ENCODE measurements at regions of chr6 and their contacts with region 1.

Region 1: DNA sequence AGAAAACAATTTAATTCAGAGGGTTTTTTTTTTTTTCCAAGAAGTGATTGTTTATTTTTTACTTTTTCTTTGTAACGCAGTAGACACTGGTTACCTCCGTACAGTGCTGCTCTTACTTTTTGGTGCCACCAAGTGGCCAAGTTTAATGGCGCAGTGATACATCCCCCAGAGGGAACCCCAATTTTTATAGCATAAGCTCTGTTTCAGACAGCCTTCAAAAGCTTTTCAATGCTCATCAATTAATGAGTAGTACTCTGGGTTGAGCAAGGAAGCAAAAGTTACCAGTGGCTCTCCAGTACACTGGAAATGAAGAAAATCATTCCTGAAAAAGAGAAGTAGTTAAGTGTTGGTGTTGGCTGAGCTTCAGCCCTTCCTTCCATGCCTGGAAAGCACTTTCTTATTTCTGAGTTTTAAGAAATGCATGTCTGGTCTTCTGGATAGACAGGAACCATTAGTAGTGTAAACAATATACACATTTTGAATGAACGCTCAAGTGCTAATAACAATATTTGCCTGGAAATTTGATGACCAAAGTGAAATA is 129.1 kb upstream of the SMLR1 start:
- DNase-seq: no peak
- ATAC-seq: peak; percentile 86 to 93 (median 90)
- H3K4me3 ChIP-seq: no peak overlapping the region
- H3K27ac ChIP-seq: no peak overlapping the region
- H3K4me1 ChIP-seq: no peaks in the 10 kb centered on the region
- H3K27me3 ChIP-seq: no peaks in the 10 kb centered on the region
- CTCF ChIP-seq: peak; percentile 68 to 78 (median 73)
- POLR2A ChIP-seq: no peak

Region 2: GRCh38 chr6:130337534-130337933 is 360.5 kb before region 1 on chr6:
- intact Hi-C with region 1: loop called in 1 of 2 experiments (anchors 10 kb)
- DNase-seq: peak; percentile 65 to 83 (median 71)
- ATAC-seq: peak; percentile 38 to 61 (median 54)
- H3K4me3 ChIP-seq: no peak overlapping the region
- H3K27ac ChIP-seq: no peak overlapping the region
- H3K4me1 ChIP-seq: peaks cover 0 to 9% (median 4%) of the 10 kb centered on the region in 4 donors
- H3K27me3 ChIP-seq: no peaks in the 10 kb centered on the region
- CTCF ChIP-seq: no peak
- POLR2A ChIP-seq: no peak